ENCODE measurements at regions of chr22 and their contacts with region 1.

Region 1: GRCh38 chr22:41697126-41697775 is 2.1 kb upstream of the MEI1 start:
- DNase-seq: peak; percentile 88 to 93
- H3K4me3 ChIP-seq: peak overlapping the region; percentile 5
- H3K4me3 Mint-ChIP-seq: peak overlapping the region; percentile 72
- H3K27ac Mint-ChIP-seq: peak overlapping the region; percentile 94
- H3K4me1 ChIP-seq: peaks cover 12% of the 10 kb centered on the region
- H3K4me1 Mint-ChIP-seq: no peaks in the 10 kb centered on the region
- H3K27me3 ChIP-seq: no peaks in the 10 kb centered on the region
- H3K27me3 Mint-ChIP-seq: no peaks in the 10 kb centered on the region
- CTCF ChIP-seq: peak; percentile 86 to 97

Region 2: GRCh38 chr22:41713004-41713403 is 15.8 kb after region 1 on chr22:
- CTCF ChIA-PET with region 1: interaction called, 20 read pairs
- POLR2A ChIA-PET with region 1: no interaction called
- intact Hi-C with region 1: no loop called
- DNase-seq: no peak
- H3K4me3 ChIP-seq: no peak overlapping the region
- H3K4me3 Mint-ChIP-seq: no peak overlapping the region
- H3K27ac Mint-ChIP-seq: no peak overlapping the region
- H3K4me1 ChIP-seq: no peaks in the 10 kb centered on the region
- H3K4me1 Mint-ChIP-seq: no peaks in the 10 kb centered on the region
- H3K27me3 ChIP-seq: no peaks in the 10 kb centered on the region
- H3K27me3 Mint-ChIP-seq: peaks cover 3% of the 10 kb centered on the region
- CTCF ChIP-seq: no peak

Region 3: GRCh38 chr22:41762980-41763779 is 65.9 kb after region 1 on chr22:
- CTCF ChIA-PET with region 1: interaction called, 15 read pairs
- POLR2A ChIA-PET with region 1: no interaction called
- intact Hi-C with region 1: no loop called
- DNase-seq: peak; percentile 53
- H3K4me3 ChIP-seq: no peak overlapping the region
- H3K4me3 Mint-ChIP-seq: no peak overlapping the region
- H3K27ac Mint-ChIP-seq: peak overlapping the region; percentile 28
- H3K4me1 ChIP-seq: no peaks in the 10 kb centered on the region
- H3K4me1 Mint-ChIP-seq: peaks cover 7% of the 10 kb centered on the region
- H3K27me3 ChIP-seq: no peaks in the 10 kb centered on the region
- H3K27me3 Mint-ChIP-seq: no peaks in the 10 kb centered on the region
- CTCF ChIP-seq: peak; percentile 51 to 55

Region 4: DNA sequence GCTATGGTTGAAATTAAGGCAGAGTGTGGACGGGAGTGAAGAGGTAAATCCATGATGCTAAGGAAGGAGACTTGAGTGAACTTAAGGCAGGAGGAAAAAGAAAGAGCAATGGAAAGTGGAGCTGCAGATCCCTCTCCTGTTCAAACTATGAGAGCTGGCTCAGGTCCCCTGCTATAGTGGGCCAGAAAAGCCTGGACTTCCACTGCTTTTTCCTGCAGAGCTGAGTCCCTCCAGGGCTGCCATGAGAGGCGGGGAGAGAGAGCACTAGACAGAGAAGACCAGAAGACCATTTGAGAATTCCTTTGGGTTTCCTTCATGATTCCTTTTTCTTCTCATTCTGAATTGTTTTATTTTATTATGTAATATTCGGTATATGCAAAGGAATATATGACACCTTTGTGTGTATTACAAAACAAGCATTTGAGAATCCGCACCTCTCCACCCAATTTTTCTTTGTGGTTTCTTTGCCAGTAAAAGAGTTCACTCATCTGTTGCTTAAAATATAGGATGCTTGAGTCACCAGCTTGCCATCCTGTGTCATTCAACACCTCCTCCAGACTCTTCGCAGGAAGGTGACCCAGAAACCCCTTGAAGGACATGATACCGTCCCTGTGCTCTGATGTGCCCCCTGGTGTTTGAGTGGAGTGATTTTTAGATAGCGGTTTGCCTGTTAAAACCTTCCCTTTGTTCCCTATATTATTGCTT is 160.1 kb after region 1 on chr22:
- CTCF ChIA-PET with region 1: interaction called, 13 read pairs
- POLR2A ChIA-PET with region 1: no interaction called
- intact Hi-C with region 1: no loop called
- DNase-seq: peak; percentile 61 to 71
- H3K4me3 ChIP-seq: no peak overlapping the region
- H3K4me3 Mint-ChIP-seq: no peak overlapping the region
- H3K27ac Mint-ChIP-seq: peak overlapping the region; percentile 74
- H3K4me1 ChIP-seq: peaks cover 36% of the 10 kb centered on the region
- H3K4me1 Mint-ChIP-seq: peaks cover 22% of the 10 kb centered on the region
- H3K27me3 ChIP-seq: no peaks in the 10 kb centered on the region
- H3K27me3 Mint-ChIP-seq: no peaks in the 10 kb centered on the region
- CTCF ChIP-seq: peak; percentile 42 to 59

Region 5: DNA sequence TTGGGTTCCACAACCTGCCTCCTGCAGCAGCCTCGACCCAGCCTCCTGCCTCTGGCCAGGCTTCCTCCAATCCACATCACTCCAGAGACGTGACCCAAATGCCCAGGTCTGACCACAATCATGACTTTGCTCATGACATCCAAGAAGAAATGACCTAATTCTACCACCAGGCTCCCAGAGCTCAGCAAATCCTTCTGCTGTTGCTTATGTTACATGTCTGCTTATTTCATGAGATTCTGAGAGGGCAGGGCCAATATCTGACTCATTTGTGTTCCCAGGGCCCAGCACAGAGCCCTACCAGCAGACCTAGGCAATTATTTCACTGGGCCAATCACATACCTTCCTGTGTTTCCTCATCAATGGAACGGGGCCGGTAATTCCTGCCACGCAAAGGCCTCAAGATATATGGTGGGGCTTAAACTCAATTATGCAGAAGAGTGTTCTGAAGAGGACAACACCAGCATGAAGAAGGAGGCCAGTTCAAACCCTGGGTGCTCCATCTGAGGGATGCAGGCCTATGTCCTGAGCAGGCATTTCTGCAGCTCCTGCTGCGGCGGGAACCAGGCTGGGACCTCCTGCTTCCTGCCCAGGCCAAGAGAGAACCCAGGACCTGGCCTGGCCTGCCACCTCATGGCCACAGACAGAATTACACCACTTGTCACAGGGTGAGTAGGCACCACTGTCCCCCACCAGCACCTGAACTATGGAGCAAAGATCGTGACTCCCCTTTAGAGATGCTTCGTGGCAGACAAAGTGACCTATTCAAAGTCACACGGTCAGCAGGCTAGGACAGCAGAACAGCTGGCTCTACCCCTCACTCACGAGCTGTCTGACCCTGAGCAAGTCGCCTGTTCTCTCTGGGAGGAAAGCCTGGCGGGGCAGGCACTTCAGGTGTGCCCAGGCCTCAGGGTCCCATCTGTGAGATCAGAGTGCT is 243.8 kb after region 1 on chr22:
- CTCF ChIA-PET with region 1: interaction called, 27 read pairs
- POLR2A ChIA-PET with region 1: interaction called, 3 read pairs
- intact Hi-C with region 1: loop called (anchors 1 kb)
- DNase-seq: peak; percentile 80 to 87
- H3K4me3 ChIP-seq: no peak overlapping the region
- H3K4me3 Mint-ChIP-seq: no peak overlapping the region
- H3K27ac Mint-ChIP-seq: no peak overlapping the region
- H3K4me1 ChIP-seq: no peaks in the 10 kb centered on the region
- H3K4me1 Mint-ChIP-seq: peaks cover 7% of the 10 kb centered on the region
- H3K27me3 ChIP-seq: no peaks in the 10 kb centered on the region
- H3K27me3 Mint-ChIP-seq: no peaks in the 10 kb centered on the region
- CTCF ChIP-seq: peak; percentile 82 to 85

Measured in Caco-2 (cell line).